Dendritic cell treated with granulocyte-macrophage colony-stimulating factor and Interleukin-4, amounts not matched to agents 40 ng/mL and 50 ng/mL, for 4 days (primary cell): ENCODE measurements at regions of chr6 and their contacts with region 1.

Region 1: DNA sequence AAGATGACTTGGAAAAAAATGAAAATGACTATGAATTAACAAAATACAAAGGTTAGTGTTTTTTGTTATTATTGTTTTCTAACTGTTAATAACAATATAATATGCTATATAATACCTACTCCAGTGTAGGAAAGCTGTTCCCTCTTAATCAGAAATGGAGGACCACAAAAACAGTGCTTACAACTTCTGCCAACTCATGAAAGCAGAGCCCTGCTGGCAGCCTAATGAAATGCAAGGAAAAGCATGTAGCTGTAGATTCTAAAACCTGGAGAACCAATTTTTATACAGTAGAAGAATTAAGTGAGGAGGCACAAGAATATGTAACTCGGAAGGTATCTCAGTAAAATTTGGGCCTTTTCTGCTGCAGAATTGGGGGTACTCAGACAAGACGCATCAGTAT is 29.4 kb downstream of the PHIP start:
- H3K4me3 Mint-ChIP-seq: no peak overlapping the region
- H3K27ac Mint-ChIP-seq: no peak overlapping the region
- H3K4me1 Mint-ChIP-seq: no peaks in the 10 kb centered on the region
- H3K27me3 Mint-ChIP-seq: no peaks in the 10 kb centered on the region

Region 2: DNA sequence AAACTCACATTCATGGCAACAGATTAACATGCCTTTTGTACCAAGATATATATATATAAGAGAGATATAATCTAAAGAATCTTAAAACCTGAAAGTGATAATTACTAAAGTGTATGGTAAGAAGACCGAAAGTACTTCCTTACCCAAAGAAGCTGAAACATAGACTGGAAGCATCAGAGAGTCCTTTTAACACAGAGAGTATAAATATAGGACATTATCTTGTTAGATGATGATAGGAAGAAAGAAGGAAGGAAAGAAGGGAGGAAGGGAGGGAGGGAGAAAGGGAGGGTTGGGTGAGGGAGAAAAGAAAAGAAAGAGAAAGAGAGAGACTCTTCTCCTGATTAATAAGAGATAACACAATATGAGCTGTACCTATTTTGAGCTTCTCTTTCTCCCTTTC is 38.8 kb before region 1 on chr6:
- intact Hi-C with region 1: loop called (anchors 5 kb)
- H3K4me3 Mint-ChIP-seq: no peak overlapping the region
- H3K27ac Mint-ChIP-seq: no peak overlapping the region
- H3K4me1 Mint-ChIP-seq: peaks cover 8% of the 10 kb centered on the region
- H3K27me3 Mint-ChIP-seq: no peaks in the 10 kb centered on the region